Cardiac septum (tissue), 1 donor: ENCODE measurements at regions of chr2 and their contacts with region 1.

Region 1: DNA sequence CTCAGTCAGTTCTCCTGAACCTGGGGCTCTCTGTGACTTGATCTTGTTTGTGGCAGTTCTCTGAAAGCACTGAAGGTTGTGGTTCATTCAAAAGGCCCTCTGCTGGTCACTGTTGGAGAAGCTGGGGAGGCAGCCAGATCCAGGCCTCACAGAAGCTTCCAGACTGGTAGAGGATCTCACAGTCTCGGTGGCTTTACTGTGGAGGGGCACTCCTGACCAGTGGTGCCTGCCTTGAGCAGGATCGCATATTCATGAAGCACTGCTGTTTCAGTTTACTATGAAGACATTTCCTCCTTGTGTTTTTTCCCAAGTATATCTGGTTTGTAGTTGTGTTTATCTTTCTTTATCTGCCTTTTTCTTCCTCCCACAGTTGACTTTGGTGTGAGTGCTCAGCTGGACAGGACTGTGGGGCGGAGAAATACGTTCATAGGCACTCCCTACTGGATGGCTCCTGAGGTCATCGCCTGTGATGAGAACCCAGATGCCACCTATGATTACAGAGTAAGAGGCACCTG is 133.9 kb downstream of the MAP4K4 start:
- DNase-seq: peak; percentile 82

Region 2: DNA sequence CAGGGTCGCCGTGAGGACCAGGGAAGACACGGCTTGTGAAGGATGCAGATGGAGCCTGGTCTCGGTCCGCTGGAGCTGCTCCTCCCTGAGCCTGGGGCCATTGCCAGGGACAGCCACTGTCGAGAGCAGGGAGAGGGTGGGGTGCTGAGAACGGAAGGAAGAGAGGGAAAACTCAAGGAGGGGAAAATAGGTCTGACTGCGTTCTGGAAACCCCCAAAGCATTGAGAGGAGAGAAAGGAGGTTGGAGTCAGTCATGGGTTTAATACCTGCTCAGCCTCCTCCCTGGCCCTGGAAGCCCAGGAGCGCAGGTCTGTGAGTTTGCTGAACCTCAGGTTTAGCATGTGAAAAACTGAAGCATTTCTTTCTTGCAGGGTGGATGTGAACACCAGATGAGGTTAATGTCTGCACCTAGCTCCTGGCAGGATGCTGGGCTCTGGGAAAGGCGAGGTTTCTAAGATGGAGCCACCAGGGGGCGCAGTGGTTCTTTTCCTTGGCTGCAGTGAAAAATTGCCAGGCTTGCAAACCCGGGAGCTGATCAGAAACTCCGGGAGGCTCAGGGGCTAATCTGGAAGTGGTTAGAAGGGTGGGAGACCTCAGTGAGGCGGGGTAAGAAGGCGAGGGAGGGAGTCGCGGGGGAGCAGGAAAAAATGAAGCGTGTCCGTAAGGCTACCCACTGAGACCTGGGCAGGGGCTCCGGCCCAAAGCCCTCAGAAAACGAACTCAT is 489.3 kb before region 1 on chr2:
- intact Hi-C with region 1: loop called (anchors 5 kb)
- DNase-seq: peak; percentile 91

Region 3: GRCh38 chr2:101419096-101419663 is 412.2 kb before region 1 on chr2:
- intact Hi-C with region 1: loop called (anchors 1 kb)
- DNase-seq: no peak

Region 4: GRCh38 chr2:101558740-101559519 is 272.5 kb before region 1 on chr2:
- intact Hi-C with region 1: loop called (anchors 5 kb)
- DNase-seq: no peak

Region 5: GRCh38 chr2:101793277-101793969 is 38.0 kb before region 1 on chr2:
- intact Hi-C with region 1: no loop called
- DNase-seq: no peak

Region 6: GRCh38 chr2:101921319-101921952 is 90.0 kb after region 1 on chr2:
- intact Hi-C with region 1: no loop called
- DNase-seq: no peak